B cell (primary cell): ENCODE measurements at regions of chrX and their contacts with region 1.

Region 1: DNA sequence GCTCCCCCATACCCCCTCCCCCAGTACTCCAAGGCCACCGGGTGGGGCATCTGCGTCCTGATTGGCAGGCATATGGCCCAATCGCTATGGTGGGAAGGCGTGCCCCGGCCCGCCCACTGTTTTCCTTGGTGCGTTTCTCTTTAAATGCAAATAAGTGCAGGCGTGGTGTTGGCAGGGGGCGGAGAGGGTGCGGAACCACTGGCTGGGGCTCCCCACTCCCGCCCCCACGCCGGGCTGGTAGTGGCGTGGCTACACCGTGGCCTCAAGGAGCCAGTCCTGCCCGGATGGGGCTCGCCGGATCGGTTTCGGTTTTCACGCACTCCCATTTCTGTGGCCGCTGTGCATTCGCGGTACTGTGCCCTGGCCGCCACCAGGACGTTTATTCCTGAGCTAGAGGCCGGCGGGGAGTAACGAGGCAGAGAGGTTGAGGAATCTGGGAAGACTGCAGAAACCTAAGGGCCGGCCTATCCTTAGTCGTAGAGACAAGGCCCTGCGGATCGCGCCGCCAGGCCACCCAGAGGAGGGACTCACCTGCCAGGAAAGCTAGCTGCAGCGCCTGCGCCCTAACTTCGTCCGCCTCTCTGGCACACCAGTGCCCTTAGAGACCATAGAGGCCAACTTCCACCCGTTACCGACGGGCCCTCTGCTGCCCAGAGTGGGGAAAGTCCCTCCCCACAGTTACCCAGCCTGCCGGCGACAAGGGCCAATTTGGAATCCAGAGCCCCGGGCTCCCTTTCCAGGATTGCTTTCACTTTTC is 405 bp upstream of the AMER1 start:
- DNase-seq: peak; percentile 91
- ATAC-seq: peak; percentile 87
- H3K4me3 ChIP-seq: peak overlapping the region; percentile 21 to 82 (median 78)
- H3K4me3 Mint-ChIP-seq: peak overlapping the region; percentile 92
- H3K27ac ChIP-seq: peak overlapping the region; percentile 86 to 89
- H3K27ac Mint-ChIP-seq: peak overlapping the region; percentile 92
- H3K4me1 ChIP-seq: peaks cover 3 to 19% of the 10 kb centered on the region in 2 donors
- H3K4me1 Mint-ChIP-seq: peaks cover 24% of the 10 kb centered on the region
- H3K27me3 ChIP-seq: no peaks in the 10 kb centered on the region
- H3K27me3 Mint-ChIP-seq: no peaks in the 10 kb centered on the region
- CTCF ChIP-seq: no peak

Region 2: GRCh38 chrX:63560601-63561218 is 645.2 kb before region 1 on chrX:
- CTCF ChIA-PET with region 1: no interaction called
- POLR2A ChIA-PET with region 1: no interaction called
- intact Hi-C with region 1: loop called (anchors 5 kb)
- DNase-seq: peak; percentile 63
- ATAC-seq: peak; percentile 68
- H3K4me3 ChIP-seq: peak overlapping the region; percentile 62 to 77 (median 63)
- H3K4me3 Mint-ChIP-seq: peak overlapping the region; percentile 99
- H3K27ac ChIP-seq: peak overlapping the region; percentile 38 to 75
- H3K27ac Mint-ChIP-seq: peak overlapping the region; percentile 91
- H3K4me1 ChIP-seq: peaks cover 6 to 8% of the 10 kb centered on the region in 2 donors
- H3K4me1 Mint-ChIP-seq: peaks cover 29% of the 10 kb centered on the region
- H3K27me3 ChIP-seq: peaks cover 0 to under 1% (median 0%) of the 10 kb centered on the region in 4 experiments
- H3K27me3 Mint-ChIP-seq: no peaks in the 10 kb centered on the region
- CTCF ChIP-seq: no peak

Region 3: DNA sequence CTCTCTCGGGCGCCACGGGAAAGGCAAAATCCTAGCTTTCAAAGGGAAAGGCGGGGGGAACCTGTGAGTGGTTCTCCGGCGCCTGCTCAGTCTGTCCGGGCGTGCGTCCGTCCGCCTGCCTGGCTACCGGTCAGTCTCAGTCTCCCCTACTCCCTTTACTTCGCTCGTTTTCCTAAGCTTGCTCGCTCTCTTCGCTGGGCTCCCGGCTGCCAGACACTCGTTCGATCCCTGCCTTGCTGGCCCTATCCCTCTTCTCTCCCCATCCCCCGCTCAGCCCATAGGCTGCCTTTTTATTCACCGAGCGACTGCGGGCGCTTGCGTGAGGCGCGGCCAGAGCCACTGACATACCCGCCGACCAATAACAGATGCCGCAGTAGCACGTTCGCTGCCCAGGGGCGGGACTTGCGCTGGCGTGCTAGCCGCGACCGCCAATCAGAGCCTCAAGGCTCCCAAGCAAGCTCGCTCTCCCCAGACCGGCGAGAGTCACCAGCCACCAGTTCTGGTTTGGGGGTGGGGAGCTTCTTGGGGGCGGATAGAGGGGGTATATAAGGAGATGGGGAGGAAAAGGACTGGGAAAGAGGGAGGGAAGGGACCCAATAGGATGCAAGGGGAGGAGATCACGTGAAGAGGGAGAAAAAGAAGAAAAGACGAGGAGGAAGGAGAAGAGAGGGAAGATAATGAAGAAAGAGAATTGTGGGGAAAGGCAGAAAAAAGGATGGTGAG is 450.9 kb before region 1 on chrX:
- CTCF ChIA-PET with region 1: no interaction called
- POLR2A ChIA-PET with region 1: interaction called, 5 read pairs
- intact Hi-C with region 1: loop called (anchors 2 kb)
- DNase-seq: peak; percentile 89
- ATAC-seq: peak; percentile 98
- H3K4me3 ChIP-seq: peak overlapping the region; percentile 65 to 86 (median 75)
- H3K4me3 Mint-ChIP-seq: peak overlapping the region; percentile 100
- H3K27ac ChIP-seq: peak overlapping the region; percentile 79 to 80
- H3K27ac Mint-ChIP-seq: peak overlapping the region; percentile 97
- H3K4me1 ChIP-seq: peaks cover 4 to 14% of the 10 kb centered on the region in 2 donors
- H3K4me1 Mint-ChIP-seq: peaks cover 27% of the 10 kb centered on the region
- H3K27me3 ChIP-seq: no peaks in the 10 kb centered on the region
- H3K27me3 Mint-ChIP-seq: no peaks in the 10 kb centered on the region
- CTCF ChIP-seq: no peak

Region 4: GRCh38 chrX:64975989-64976672 is 770.2 kb after region 1 on chrX and contains the start of gene ZC4H2:
- CTCF ChIA-PET with region 1: no interaction called
- POLR2A ChIA-PET with region 1: no interaction called
- intact Hi-C with region 1: loop called (anchors 5 kb)
- DNase-seq: peak; percentile 74
- ATAC-seq: peak; percentile 96
- H3K4me3 ChIP-seq: peak within 1 kb of the TSS; percentile 39 to 64 (median 58)
- H3K4me3 Mint-ChIP-seq: peak within 1 kb of the TSS; percentile 92
- H3K27ac ChIP-seq: peak within 1 kb of the TSS in 1 of 2 donors; percentile 33
- H3K27ac Mint-ChIP-seq: peak within 1 kb of the TSS; percentile 64
- H3K4me1 ChIP-seq: peaks cover 4 to 5% of the 10 kb centered on the region in 2 donors
- H3K4me1 Mint-ChIP-seq: peaks cover 15% of the 10 kb centered on the region
- H3K27me3 ChIP-seq: no peaks in the 10 kb centered on the region
- H3K27me3 Mint-ChIP-seq: no peaks in the 10 kb centered on the region
- CTCF ChIP-seq: no peak
- total RNA-seq, gene ZC4H2: 10.9 and 14.1 TPM in 2 replicates

Region 5: DNA sequence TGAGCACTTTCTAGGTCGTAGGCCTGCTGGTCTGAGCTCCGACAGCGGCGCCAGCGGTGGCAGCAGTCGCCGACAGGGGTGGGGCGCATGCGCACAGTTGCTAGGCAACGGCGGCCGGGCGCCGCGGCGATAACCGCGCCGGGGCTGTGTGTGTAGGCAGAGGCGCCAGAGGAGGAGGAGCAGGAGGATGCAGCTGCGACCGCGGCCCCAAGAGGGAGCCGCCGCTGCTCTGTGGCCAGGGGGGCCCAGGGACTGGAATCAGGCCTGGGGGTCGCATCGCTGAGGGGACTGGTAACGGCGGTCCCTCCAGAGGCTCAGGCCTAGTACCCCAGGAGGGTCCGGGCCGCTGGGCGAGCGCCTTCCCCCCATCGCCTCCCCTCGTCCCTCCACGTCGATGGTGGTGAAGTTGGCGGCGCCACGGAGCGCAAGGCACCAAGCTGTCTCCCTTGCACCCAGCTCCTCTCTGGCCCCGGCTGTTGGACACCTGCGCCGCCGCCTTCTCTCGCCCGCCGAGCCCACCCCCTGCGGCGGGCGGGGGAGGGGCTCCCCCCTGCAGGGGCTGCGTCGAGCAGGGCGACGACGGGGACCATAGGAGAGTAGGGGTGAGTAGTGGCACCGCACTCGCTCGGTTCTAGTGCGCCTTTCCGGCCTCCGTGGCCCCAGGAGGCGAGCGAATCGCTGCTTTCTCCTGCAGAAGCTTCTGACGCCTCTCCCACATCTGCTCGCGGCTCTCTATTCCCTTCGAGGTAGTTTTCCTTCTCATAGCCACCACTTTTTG is 828.9 kb after region 1 on chrX:
- CTCF ChIA-PET with region 1: no interaction called
- POLR2A ChIA-PET with region 1: no interaction called
- intact Hi-C with region 1: loop called (anchors 10 kb)
- DNase-seq: peak; percentile 89
- ATAC-seq: peak; percentile 90
- H3K4me3 ChIP-seq: peak within 1 kb of the TSS; percentile 6 to 71 (median 68)
- H3K4me3 Mint-ChIP-seq: peak within 1 kb of the TSS; percentile 96
- H3K27ac ChIP-seq: peak within 1 kb of the TSS; percentile 73 to 85
- H3K27ac Mint-ChIP-seq: peak within 1 kb of the TSS; percentile 98
- H3K4me1 ChIP-seq: peaks cover 8 to 10% of the 10 kb centered on the region in 2 donors
- H3K4me1 Mint-ChIP-seq: peaks cover 24% of the 10 kb centered on the region
- H3K27me3 ChIP-seq: no peaks in the 10 kb centered on the region
- H3K27me3 Mint-ChIP-seq: no peaks in the 10 kb centered on the region
- CTCF ChIP-seq: peak; percentile 57

Region 6: GRCh38 chrX:65406532-65406931 is 1200.6 kb after region 1 on chrX:
- CTCF ChIA-PET with region 1: no interaction called
- POLR2A ChIA-PET with region 1: no interaction called
- intact Hi-C with region 1: loop called (anchors 5 kb)
- DNase-seq: peak; percentile 33
- ATAC-seq: peak; percentile 33
- H3K4me3 ChIP-seq: peak overlapping the region in 2 of 5 experiments; percentile 18 to 39
- H3K4me3 Mint-ChIP-seq: peak overlapping the region; percentile 76
- H3K27ac ChIP-seq: no peak overlapping the region
- H3K27ac Mint-ChIP-seq: no peak overlapping the region
- H3K4me1 ChIP-seq: no peaks in the 10 kb centered on the region
- H3K4me1 Mint-ChIP-seq: peaks cover 4% of the 10 kb centered on the region
- H3K27me3 ChIP-seq: peaks cover 0 to 16% (median 8%) of the 10 kb centered on the region in 4 experiments
- H3K27me3 Mint-ChIP-seq: peaks cover 21% of the 10 kb centered on the region
- CTCF ChIP-seq: no peak